Right cardiac atrium (tissue), 5 donors: ENCODE measurements at regions of chr7 and their contacts with region 1.

Region 1: DNA sequence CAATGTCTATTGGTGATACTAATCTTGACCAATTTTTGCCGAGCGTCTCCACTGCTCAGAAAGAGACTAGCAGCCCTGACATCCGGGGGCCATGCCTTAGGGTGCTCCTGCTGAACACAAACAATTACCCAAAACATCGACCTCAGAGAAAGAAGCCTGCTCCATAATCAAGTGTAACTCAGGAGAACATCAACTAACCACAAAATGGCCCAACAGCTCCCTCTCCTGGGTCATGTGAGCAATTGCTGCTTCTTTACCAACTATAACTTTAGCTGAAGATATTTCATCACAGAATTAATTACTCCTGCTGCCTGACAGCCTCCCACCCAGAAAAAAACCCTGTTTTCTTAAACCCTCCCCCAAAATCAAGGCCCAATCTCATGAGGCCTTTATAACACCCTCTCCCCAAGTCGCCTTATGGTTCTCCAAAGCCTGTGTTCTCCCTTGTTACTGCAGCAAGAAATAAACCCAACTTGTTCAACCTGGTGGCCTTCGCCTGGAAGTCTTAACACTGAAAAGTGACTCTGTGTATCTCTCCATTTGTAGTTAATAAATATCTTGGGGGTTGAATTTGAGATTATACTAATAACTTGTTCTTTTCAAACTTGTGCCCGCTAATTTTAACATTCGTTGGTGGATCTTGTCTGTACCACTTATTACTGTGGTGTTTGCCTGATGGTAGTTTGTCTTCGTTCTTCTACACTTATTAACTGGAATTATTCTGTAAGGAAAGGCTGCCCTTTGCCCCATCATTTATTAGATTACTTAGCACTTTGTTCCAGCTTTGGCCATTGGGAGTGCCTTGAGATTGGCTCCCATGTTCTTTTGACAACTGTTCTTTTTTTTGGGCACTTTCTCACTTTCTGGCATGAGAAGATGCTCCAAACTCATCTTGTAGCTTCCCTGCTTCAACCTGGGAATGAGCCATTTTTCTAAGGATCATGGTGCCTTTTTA is 21.2 kb upstream of the RAMP3 start:
- DNase-seq: peak in 1 of 3 donors; percentile 50
- ATAC-seq: peak; percentile 67 to 72
- H3K4me3 ChIP-seq: no peak overlapping the region
- H3K27ac ChIP-seq: no peak overlapping the region
- H3K4me1 ChIP-seq: no peaks in the 10 kb centered on the region
- H3K27me3 ChIP-seq: no peaks in the 10 kb centered on the region

Region 2: DNA sequence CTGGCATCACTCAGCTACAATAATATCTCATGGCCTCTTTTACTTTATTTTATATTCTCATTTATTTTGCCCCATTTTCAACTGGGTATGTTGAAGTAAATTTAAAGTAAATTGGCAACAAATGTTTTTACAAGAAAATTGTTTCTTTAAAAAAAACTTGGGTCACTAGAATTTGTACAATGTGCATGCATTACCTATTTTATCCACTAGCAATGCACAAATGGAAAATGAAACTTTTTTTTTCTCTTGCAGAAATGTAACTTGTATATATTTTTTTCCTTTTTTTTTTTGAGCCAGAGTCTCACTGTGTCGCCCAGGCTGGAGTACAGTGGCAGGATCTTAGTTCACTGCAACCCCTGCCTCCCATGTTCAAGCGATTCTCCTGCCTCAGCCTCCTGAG is 278.2 kb before region 1 on chr7:
- intact Hi-C with region 1: loop called in 3 of 4 experiments (anchors 5 to 10 kb)
- DNase-seq: no peak
- ATAC-seq: no peak
- H3K4me3 ChIP-seq: no peak overlapping the region
- H3K27ac ChIP-seq: no peak overlapping the region
- H3K4me1 ChIP-seq: no peaks in the 10 kb centered on the region
- H3K27me3 ChIP-seq: no peaks in the 10 kb centered on the region

Region 3: GRCh38 chr7:44867073-44867995 is 269.0 kb before region 1 on chr7:
- intact Hi-C with region 1: loop called in 1 of 4 experiments (anchors 10 kb)
- DNase-seq: no peak
- ATAC-seq: peak; percentile 59 to 64
- H3K4me3 ChIP-seq: no peak overlapping the region
- H3K27ac ChIP-seq: no peak overlapping the region
- H3K4me1 ChIP-seq: no peaks in the 10 kb centered on the region
- H3K27me3 ChIP-seq: no peaks in the 10 kb centered on the region

Region 4: DNA sequence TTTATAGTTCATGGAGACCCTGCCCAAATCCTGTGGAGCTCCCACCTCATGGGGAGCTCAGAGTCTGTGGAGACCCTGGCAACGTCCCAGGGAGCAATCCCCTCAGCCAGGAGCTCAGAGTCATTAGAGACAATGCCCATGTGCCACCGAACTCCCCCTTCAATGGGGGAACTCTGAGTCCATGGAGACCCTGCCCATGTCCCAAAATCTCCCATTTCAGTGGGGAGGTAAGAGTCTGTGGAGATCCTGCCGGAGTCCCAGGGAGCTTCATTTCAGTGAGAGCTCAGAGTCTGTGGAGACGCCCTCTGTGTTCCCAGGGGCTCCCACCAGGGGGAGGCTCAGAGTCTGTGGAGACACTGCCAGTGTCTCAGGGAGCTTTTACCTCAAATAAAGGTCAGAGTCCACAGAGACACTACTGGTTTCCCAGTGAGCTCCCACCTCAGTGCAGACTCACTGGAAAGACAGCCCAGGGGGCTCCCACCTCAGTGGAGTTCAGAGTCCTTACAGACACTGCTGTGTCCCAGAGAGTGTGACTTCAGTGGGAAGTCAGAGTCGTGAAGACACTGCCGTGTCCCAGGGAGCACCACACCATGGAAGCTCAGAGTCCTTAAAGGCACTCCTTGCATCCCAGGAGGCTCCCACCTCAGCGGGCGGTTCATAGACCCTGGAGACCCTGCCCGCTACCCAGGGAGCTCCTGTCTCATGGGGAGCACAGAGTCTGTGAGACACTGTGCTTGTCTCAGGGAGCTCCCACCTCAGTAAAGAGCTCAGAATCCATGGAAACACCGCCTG is 162.6 kb before region 1 on chr7:
- intact Hi-C with region 1: loop called in 3 of 4 experiments (anchors 5 kb)
- DNase-seq: peak in 2 of 3 donors; percentile 74 to 80
- ATAC-seq: peak in 1 of 2 donors; percentile 40
- H3K4me3 ChIP-seq: no peak overlapping the region
- H3K27ac ChIP-seq: no peak overlapping the region
- H3K4me1 ChIP-seq: no peaks in the 10 kb centered on the region
- H3K27me3 ChIP-seq: no peaks in the 10 kb centered on the region